B cell (primary cell): ENCODE measurements at regions of chr17 and their contacts with region 1.

Region 1: DNA sequence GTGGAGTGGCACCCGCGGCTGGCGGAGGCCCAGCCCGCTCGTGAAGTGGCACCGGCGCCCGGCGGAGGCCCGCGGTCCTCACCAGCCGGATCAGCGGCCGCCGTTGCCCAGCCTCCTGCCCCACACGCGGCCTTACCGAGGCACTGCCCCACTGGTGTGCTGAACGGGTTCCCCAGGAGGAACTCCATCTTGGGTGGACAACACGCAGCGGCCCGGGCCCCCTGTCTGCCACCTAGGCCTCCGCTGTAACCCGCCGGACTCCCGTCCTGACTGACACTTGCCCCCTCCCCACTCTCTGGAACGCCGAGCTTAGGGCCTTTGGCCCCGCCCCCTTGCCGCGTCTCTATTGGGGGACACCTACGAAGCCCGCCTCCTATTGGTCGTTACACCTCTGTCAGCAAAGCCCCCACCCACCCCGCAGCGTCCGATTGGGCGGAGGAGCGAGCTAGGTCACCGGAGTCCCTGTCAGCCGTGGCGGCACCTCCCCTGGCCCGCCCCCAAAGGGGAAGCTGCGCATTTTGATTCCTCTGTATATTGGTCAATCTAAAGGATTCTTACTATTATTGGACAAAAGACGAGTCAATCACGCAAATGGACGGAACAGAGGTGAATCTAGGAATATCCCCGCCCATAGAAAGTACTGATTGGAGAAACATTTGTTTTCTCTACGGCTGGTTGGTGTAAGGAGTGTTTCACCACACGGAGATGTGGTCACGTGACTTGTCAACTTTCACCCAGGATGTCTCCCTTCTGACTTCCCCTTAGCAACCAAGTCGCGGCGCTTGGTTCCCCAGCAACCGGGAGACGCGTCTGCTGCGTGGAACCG is at the starts of genes DRC3 and TOM1L2:
- DNase-seq: peak; percentile 100
- ATAC-seq: peak; percentile 90
- H3K4me3 ChIP-seq: peak within 1 kb of the TSS; percentile 41 to 82 (median 76)
- H3K4me3 Mint-ChIP-seq: peak within 1 kb of the TSS; percentile 97
- H3K27ac ChIP-seq: peak within 1 kb of the TSS; percentile 52 to 89
- H3K27ac Mint-ChIP-seq: peak within 1 kb of the TSS; percentile 96
- H3K4me1 ChIP-seq: peaks cover 12 to 17% of the 10 kb centered on the region in 2 donors
- H3K4me1 Mint-ChIP-seq: peaks cover 22% of the 10 kb centered on the region
- H3K27me3 ChIP-seq: no peaks in the 10 kb centered on the region
- H3K27me3 Mint-ChIP-seq: no peaks in the 10 kb centered on the region
- CTCF ChIP-seq: no peak
- total RNA-seq, gene DRC3: 0.17 TPM in 1 of 2 replicates, not detected in the other
- total RNA-seq, gene TOM1L2: 29.7 and 34.4 TPM in 2 replicates

Region 2: DNA sequence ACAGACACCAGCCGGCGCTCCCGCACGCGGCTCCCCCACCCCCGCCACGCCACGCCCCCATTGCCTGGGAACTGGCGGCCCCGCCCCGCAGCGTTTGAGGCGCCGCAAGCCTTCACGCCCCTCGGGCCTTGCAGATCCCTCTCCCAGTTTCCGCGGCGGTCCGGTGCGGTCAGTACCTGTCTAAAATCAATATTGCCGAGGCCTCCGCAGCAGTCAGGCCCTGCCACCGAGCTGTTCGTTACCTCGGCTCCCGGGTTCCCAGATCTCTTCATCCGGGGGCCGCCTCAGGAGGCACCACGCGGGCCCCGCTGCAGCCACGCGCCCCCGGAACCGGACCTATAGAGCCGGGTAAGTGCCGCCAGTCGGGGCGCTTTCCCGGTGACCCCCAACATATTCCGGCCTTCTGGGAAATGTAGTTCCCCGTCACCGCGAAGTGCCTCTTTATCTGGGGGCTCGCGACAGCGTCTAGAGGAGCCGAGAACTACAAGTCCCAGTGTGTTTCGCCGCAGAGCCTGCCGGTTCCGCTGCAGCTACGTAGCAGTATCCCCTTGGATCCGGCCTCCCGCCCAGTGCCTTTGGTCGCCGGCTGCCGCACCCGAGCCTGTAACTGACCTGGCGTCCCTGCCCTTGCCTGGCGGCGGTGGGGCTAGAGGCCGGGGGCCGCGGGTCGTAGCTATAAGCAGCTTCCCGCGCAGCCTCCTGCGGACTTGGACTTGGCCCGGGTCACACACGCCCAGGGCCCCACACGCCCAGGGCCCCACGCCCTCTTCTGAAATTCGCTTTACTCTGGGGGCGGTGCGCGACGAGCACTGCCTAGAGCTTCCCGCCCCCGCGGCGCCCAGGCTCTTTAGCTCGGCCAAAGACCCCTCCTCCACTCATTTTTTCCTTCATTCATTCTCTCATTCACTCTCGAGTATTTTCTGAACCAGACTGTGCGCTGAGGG is 380.7 kb before region 1 on chr17 and contains the start of gene PEMT:
- CTCF ChIA-PET with region 1: no interaction called
- POLR2A ChIA-PET with region 1: no interaction called
- intact Hi-C with region 1: loop called (anchors 1 kb)
- DNase-seq: peak; percentile 98
- ATAC-seq: peak; percentile 92
- H3K4me3 ChIP-seq: peak within 1 kb of the TSS; percentile 65 to 85 (median 71)
- H3K4me3 Mint-ChIP-seq: peak within 1 kb of the TSS; percentile 93
- H3K27ac ChIP-seq: peak within 1 kb of the TSS; percentile 67 to 80
- H3K27ac Mint-ChIP-seq: peak within 1 kb of the TSS; percentile 86
- H3K4me1 ChIP-seq: peaks cover 12 to 22% of the 10 kb centered on the region in 2 donors
- H3K4me1 Mint-ChIP-seq: peaks cover 16% of the 10 kb centered on the region
- H3K27me3 ChIP-seq: no peaks in the 10 kb centered on the region
- H3K27me3 Mint-ChIP-seq: no peaks in the 10 kb centered on the region
- CTCF ChIP-seq: no peak
- total RNA-seq, gene PEMT: 9.0 and 10.7 TPM in 2 replicates

Region 3: GRCh38 chr17:17823433-17824118 is 148.8 kb before region 1 on chr17:
- CTCF ChIA-PET with region 1: no interaction called
- POLR2A ChIA-PET with region 1: no interaction called
- intact Hi-C with region 1: loop called (anchors 1 kb)
- DNase-seq: peak; percentile 86
- ATAC-seq: peak; percentile 93
- H3K4me3 ChIP-seq: peak overlapping the region; percentile 35 to 82 (median 56)
- H3K4me3 Mint-ChIP-seq: peak overlapping the region; percentile 86
- H3K27ac ChIP-seq: peak overlapping the region; percentile 16 to 56
- H3K27ac Mint-ChIP-seq: peak overlapping the region; percentile 67
- H3K4me1 ChIP-seq: peaks cover 28 to 41% of the 10 kb centered on the region in 2 donors
- H3K4me1 Mint-ChIP-seq: peaks cover 52% of the 10 kb centered on the region
- H3K27me3 ChIP-seq: no peaks in the 10 kb centered on the region
- H3K27me3 Mint-ChIP-seq: no peaks in the 10 kb centered on the region
- CTCF ChIP-seq: no peak

Region 4: GRCh38 chr17:17959520-17960361 is 12.6 kb before region 1 on chr17:
- CTCF ChIA-PET with region 1: interaction called, 4 read pairs
- POLR2A ChIA-PET with region 1: interaction called, 14 read pairs
- intact Hi-C with region 1: no loop called
- DNase-seq: no peak
- ATAC-seq: no peak
- H3K4me3 ChIP-seq: peak overlapping the region in 2 of 5 experiments; percentile 1 to 25
- H3K4me3 Mint-ChIP-seq: peak overlapping the region; percentile 68
- H3K27ac ChIP-seq: peak overlapping the region; percentile 35 to 79
- H3K27ac Mint-ChIP-seq: peak overlapping the region; percentile 73
- H3K4me1 ChIP-seq: peaks cover 24 to 27% of the 10 kb centered on the region in 2 donors
- H3K4me1 Mint-ChIP-seq: peaks cover 46% of the 10 kb centered on the region
- H3K27me3 ChIP-seq: no peaks in the 10 kb centered on the region
- H3K27me3 Mint-ChIP-seq: no peaks in the 10 kb centered on the region
- CTCF ChIP-seq: no peak

Region 5: DNA sequence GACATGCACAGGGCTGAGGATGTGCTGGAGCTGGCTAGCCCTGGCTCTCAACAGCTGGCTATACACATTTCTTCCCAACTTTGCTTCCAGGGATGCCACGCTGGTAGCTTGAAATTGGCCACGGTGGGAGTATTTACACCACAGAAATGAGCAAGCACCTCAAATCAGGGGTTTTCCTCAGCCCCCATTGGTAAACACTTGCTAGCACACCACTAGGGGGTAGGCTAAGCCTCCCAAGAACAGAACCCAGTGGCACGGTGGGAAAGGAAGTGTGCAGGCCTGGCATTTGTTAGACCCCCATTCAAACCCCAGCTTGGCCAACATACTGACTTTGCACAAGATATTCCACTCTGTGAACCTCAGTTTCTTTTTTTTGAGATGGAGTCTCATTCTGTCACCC is 13.2 kb after region 1 on chr17:
- CTCF ChIA-PET with region 1: no interaction called
- POLR2A ChIA-PET with region 1: no interaction called
- intact Hi-C with region 1: no loop called
- DNase-seq: no peak
- ATAC-seq: no peak
- H3K4me3 ChIP-seq: no peak overlapping the region
- H3K4me3 Mint-ChIP-seq: no peak overlapping the region
- H3K27ac ChIP-seq: no peak overlapping the region
- H3K27ac Mint-ChIP-seq: no peak overlapping the region
- H3K4me1 ChIP-seq: no peaks in the 10 kb centered on the region
- H3K4me1 Mint-ChIP-seq: no peaks in the 10 kb centered on the region
- H3K27me3 ChIP-seq: no peaks in the 10 kb centered on the region
- H3K27me3 Mint-ChIP-seq: no peaks in the 10 kb centered on the region
- CTCF ChIP-seq: no peak

Region 6: GRCh38 chr17:18033442-18034099 is 61.2 kb after region 1 on chr17:
- CTCF ChIA-PET with region 1: interaction called, 7 read pairs
- POLR2A ChIA-PET with region 1: interaction called, 3 read pairs
- intact Hi-C with region 1: loop called (anchors 1 kb)
- DNase-seq: peak; percentile 86
- ATAC-seq: peak; percentile 72
- H3K4me3 ChIP-seq: no peak overlapping the region
- H3K4me3 Mint-ChIP-seq: no peak overlapping the region
- H3K27ac ChIP-seq: no peak overlapping the region
- H3K27ac Mint-ChIP-seq: peak overlapping the region; percentile 82
- H3K4me1 ChIP-seq: peaks cover 16 to 39% of the 10 kb centered on the region in 2 donors
- H3K4me1 Mint-ChIP-seq: peaks cover 54% of the 10 kb centered on the region
- H3K27me3 ChIP-seq: no peaks in the 10 kb centered on the region
- H3K27me3 Mint-ChIP-seq: no peaks in the 10 kb centered on the region
- CTCF ChIP-seq: peak; percentile 73

Region 7: DNA sequence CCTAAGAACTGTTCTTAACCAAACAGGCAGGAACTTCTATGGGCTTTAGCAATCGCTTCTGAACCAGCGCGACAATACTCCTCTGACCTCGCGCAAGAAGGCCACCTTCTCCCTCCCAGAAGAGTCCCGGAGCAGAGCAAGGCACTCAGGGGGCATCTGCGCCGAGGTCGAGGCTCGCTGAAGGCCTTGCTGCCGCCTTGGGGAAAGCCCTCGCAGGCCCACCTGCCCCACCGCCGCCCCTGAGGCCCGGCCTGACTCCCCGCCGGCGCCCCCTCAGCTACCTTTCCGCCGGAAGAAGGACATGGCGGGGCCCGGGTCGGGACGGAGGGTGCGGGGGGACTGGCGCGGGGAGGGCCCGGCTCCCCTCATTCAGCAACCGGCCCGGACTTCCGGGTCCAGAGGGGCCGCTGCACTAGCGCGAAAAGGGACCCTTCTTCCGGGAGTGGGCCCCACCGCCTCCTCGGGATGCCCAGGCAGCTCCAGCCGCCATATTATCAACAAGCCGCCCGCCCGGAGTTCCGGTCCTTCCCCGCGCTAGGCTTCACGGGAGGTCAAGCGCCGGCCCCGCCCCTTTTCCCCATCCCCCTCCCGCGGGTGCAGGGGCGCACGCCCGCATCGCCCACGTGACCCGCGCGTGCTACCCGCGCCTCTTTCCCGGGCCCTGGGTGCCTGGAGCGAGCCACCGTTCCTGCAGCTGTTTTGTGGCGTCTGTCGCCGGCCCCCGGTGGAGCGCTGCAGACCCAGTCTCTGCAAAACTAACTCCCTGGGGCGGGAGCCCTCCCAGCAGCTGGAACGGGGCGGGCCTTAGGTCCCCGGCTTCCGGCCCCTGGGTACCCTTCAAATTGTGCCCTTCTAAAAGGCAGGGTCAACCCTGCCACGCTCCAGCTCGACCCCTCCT is 2005.2 kb after region 1 on chr17 and contains the start of gene AKAP10:
- CTCF ChIA-PET with region 1: no interaction called
- POLR2A ChIA-PET with region 1: no interaction called
- intact Hi-C with region 1: loop called (anchors 10 kb)
- DNase-seq: peak; percentile 94
- ATAC-seq: peak; percentile 87
- H3K4me3 ChIP-seq: peak within 1 kb of the TSS; percentile 83 to 93 (median 90)
- H3K4me3 Mint-ChIP-seq: peak within 1 kb of the TSS; percentile 99
- H3K27ac ChIP-seq: peak within 1 kb of the TSS; percentile 85 to 96
- H3K27ac Mint-ChIP-seq: peak within 1 kb of the TSS; percentile 98
- H3K4me1 ChIP-seq: peaks cover 23 to 40% of the 10 kb centered on the region in 2 donors
- H3K4me1 Mint-ChIP-seq: peaks cover 47% of the 10 kb centered on the region
- H3K27me3 ChIP-seq: no peaks in the 10 kb centered on the region
- H3K27me3 Mint-ChIP-seq: no peaks in the 10 kb centered on the region
- CTCF ChIP-seq: no peak
- total RNA-seq, gene AKAP10: 68.2 and 71.2 TPM in 2 replicates